Upper lobe of right lung (tissue), 1 donor: ENCODE measurements at regions of chr2 and their contacts with region 1.

Region 1: GRCh38 chr2:36530178-36530982 is 67.6 kb downstream of the FEZ2 start:
- DNase-seq: no peak
- ATAC-seq: no peak
- H3K4me3 ChIP-seq: no peak overlapping the region
- H3K27ac ChIP-seq: no peak overlapping the region
- H3K4me1 ChIP-seq: no peaks in the 10 kb centered on the region
- H3K27me3 ChIP-seq: no peaks in the 10 kb centered on the region
- CTCF ChIP-seq: no peak

Region 2: GRCh38 chr2:36246320-36246990 is 283.9 kb before region 1 on chr2:
- intact Hi-C with region 1: no loop called
- DNase-seq: no peak
- ATAC-seq: no peak
- H3K4me3 ChIP-seq: no peak overlapping the region
- H3K27ac ChIP-seq: no peak overlapping the region
- H3K4me1 ChIP-seq: no peaks in the 10 kb centered on the region
- H3K27me3 ChIP-seq: no peaks in the 10 kb centered on the region
- CTCF ChIP-seq: no peak

Region 3: GRCh38 chr2:36663851-36664695 is 133.7 kb after region 1 on chr2:
- intact Hi-C with region 1: loop called (anchors 10 kb)
- DNase-seq: no peak
- ATAC-seq: peak; percentile 86
- H3K4me3 ChIP-seq: no peak overlapping the region
- H3K27ac ChIP-seq: no peak overlapping the region
- H3K4me1 ChIP-seq: no peaks in the 10 kb centered on the region
- H3K27me3 ChIP-seq: no peaks in the 10 kb centered on the region
- CTCF ChIP-seq: peak; percentile 80